Activated T-helper 2 cell treated with anti-CD3 and anti-CD28 coated beads, Interferon-gamma antibody, Interleukin-2, Interleukin-4, amounts not matched to agents 10 μg/mL and 5 μg/mL and 100 μg/mL, durations not matched to agents 14 hours and 24 hours and 36 hours (primary cell): ENCODE measurements at regions of chr5 and their contacts with region 1.

Region 1: DNA sequence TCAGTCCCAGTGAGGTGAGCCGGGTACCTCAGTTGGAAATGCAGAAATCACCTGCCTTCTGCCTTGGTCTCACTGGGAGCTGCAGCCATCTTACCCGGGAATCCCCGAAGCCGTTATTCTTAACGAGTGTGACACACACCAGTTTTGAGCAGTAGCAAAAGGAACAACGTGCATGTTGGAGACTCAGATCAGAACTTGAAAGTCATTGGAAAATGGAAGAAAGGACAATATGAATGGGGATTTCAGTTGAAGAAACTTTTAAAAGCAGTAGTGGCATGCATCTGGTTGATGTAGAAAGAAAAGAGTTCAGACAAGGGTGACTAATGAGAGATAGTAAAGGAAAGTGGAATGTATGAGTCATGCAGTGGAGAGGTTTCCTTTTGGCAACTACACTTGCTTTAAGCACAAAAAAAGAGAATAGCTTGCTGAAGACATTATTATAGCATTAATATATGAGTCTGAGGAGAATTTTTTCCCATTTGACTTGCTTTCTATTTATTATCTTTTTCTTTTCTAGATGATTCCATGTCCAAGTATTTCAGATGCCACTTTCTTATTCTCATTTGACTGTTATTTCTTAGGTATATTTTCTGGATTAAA is 44.4 kb upstream of the ANKDD1B start:
- DNase-seq: peak; percentile 30
- H3K4me3 Mint-ChIP-seq: peak overlapping the region; percentile 20
- H3K27ac Mint-ChIP-seq: peak overlapping the region; percentile 96
- H3K4me1 Mint-ChIP-seq: peaks cover 43% of the 10 kb centered on the region
- H3K27me3 Mint-ChIP-seq: no peaks in the 10 kb centered on the region

Region 2: GRCh38 chr5:75320341-75320740 is 246.5 kb before region 1 on chr5:
- intact Hi-C with region 1: loop called (anchors 1 kb)
- DNase-seq: no peak
- H3K4me3 Mint-ChIP-seq: no peak overlapping the region
- H3K27ac Mint-ChIP-seq: peak overlapping the region; percentile 77
- H3K4me1 Mint-ChIP-seq: peaks cover 24% of the 10 kb centered on the region
- H3K27me3 Mint-ChIP-seq: no peaks in the 10 kb centered on the region

Region 3: GRCh38 chr5:75351139-75351926 is 215.5 kb before region 1 on chr5:
- intact Hi-C with region 1: loop called (anchors 1 kb)
- DNase-seq: no peak
- H3K4me3 Mint-ChIP-seq: peak overlapping the region; percentile 30
- H3K27ac Mint-ChIP-seq: peak overlapping the region; percentile 80
- H3K4me1 Mint-ChIP-seq: peaks cover 42% of the 10 kb centered on the region
- H3K27me3 Mint-ChIP-seq: no peaks in the 10 kb centered on the region

Region 4: GRCh38 chr5:75524071-75524470 is 42.7 kb before region 1 on chr5:
- intact Hi-C with region 1: loop called (anchors 1 kb)
- DNase-seq: no peak
- H3K4me3 Mint-ChIP-seq: no peak overlapping the region
- H3K27ac Mint-ChIP-seq: peak overlapping the region; percentile 18
- H3K4me1 Mint-ChIP-seq: peaks cover 47% of the 10 kb centered on the region
- H3K27me3 Mint-ChIP-seq: no peaks in the 10 kb centered on the region

Region 5: GRCh38 chr5:75717082-75717922 is 150.5 kb after region 1 on chr5 and contains the start of gene POC5:
- intact Hi-C with region 1: loop called (anchors 5 kb)
- DNase-seq: peak; percentile 97
- H3K4me3 Mint-ChIP-seq: peak within 1 kb of the TSS; percentile 100
- H3K27ac Mint-ChIP-seq: peak within 1 kb of the TSS; percentile 100
- H3K4me1 Mint-ChIP-seq: peaks cover 29% of the 10 kb centered on the region
- H3K27me3 Mint-ChIP-seq: peaks cover 10% of the 10 kb centered on the region
- total RNA-seq, gene POC5: 16.2 and 16.5 TPM in 2 replicates

Region 6: GRCh38 chr5:76544268-76544926 is 977.6 kb after region 1 on chr5:
- intact Hi-C with region 1: loop called (anchors 10 kb)
- DNase-seq: peak; percentile 33
- H3K4me3 Mint-ChIP-seq: peak overlapping the region; percentile 75
- H3K27ac Mint-ChIP-seq: peak overlapping the region; percentile 90
- H3K4me1 Mint-ChIP-seq: peaks cover 83% of the 10 kb centered on the region
- H3K27me3 Mint-ChIP-seq: no peaks in the 10 kb centered on the region